ENCODE measurements at regions of chr19 and their contacts with region 1.

Region 1: DNA sequence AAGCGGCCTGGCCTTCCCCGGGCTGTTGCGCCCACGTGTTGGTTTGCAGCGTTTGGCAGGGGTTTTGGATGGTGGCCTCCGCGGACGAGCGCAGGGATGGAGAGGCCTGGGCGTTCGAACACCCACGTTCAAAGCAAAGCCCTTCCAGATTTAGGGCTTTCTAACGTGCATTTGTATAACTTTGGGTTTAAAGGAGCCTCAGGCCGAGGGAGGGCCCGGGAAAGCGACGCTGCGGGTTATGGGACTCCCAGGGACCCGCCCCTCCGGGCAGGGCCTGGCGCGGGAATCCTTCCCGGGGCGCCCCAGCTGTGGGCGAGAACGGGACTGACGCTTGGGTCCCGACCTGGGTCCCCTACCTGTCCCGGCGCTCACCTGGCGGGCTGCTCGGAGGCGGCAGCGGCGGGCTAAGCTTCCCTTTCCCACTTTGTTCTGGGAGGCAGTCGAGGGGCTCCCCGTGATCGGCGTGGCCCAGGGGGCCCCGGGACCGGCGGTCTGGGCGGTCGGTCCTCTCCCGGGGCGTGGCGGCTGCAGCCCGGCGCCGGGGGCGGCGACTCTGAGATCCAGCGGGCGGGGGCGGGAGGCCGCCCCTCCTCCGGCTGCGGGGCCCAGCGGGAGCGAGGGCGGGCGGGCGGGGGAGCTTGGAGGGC is at the start of gene FBXO17:
- DNase-seq: peak; percentile 84 to 87
- ATAC-seq: peak; percentile 83
- H3K4me3 ChIP-seq: peak within 1 kb of the TSS; percentile 51
- H3K27ac ChIP-seq: peak within 1 kb of the TSS; percentile 91 to 94
- H3K4me1 ChIP-seq: peaks cover 51% of the 10 kb centered on the region
- CTCF ChIP-seq: no peak; the same call in 2 of the 3 replicates
- EP300 ChIP-seq: 0 out of 5 replicates have a peak, but pooled peaks of 1 of the 2 experiments have one; percentile 6
- POLR2A ChIP-seq: peak; percentile 41
- RAD21 ChIP-seq: 0 out of 5 replicates have a peak, but pooled peaks have one; percentile 11 to 16
- polyA plus RNA-seq, gene FBXO17: 68.1 and 73.1 TPM in 2 replicates

Region 2: DNA sequence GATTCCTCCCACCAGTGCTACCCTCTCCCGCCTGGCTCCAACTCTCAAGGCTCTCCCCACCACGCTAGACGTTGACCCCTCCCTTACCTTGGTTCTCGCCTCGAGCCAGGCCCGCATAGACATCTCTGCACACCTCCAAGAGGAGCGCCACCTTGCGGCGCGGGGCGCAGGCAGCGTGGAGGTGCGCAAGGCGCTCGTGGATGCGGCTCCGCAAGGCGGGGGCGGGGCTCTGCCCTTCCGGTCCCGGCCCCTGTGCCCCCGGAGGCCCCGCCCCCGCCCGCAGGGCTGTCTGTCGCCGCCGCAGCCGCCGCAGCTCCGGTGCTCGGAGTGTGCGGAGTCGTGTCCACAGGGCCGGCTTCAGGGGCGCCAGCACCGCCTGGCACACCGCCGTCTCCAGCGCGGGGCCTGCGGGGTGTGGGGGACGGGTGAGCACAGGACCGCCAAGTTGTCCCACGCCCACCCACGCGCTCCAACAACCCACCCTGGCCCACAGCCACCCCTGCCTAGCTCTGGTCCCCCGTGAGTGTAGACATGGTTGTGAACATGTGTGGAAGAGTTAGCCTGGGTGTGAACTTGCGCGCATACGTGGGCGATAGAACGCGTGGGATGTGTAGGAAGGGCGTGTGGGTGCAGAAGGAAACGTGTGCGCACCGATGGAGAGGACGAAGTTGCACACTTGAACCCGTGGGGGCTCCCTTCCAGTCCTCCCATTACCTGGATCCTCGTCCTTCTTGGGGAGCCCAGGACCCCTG is 105.3 kb before region 1 on chr19:
- CTCF ChIA-PET with region 1: no interaction called
- POLR2A ChIA-PET with region 1: no interaction called
- DNase-seq: peak; percentile 89 to 93
- ATAC-seq: peak; percentile 90 to 94
- H3K4me3 ChIP-seq: peak overlapping the region; percentile 31
- H3K27ac ChIP-seq: peak overlapping the region; percentile 56 to 80
- H3K4me1 ChIP-seq: peaks cover 18% of the 10 kb centered on the region
- CTCF ChIP-seq: peak; percentile 99
- EP300 ChIP-seq: no peak
- POLR2A ChIP-seq: no peak; the same call in 1 of the 2 replicates
- RAD21 ChIP-seq: peak; percentile 73 to 88

Region 3: GRCh38 chr19:38949580-38950367 is 25.6 kb before region 1 on chr19:
- CTCF ChIA-PET with region 1: interaction called, 344 read pairs
- POLR2A ChIA-PET with region 1: no interaction called
- DNase-seq: no peak
- ATAC-seq: no peak
- H3K4me3 ChIP-seq: no peak overlapping the region
- H3K27ac ChIP-seq: no peak overlapping the region
- H3K4me1 ChIP-seq: peaks cover 23% of the 10 kb centered on the region
- CTCF ChIP-seq: no peak
- EP300 ChIP-seq: no peak
- POLR2A ChIP-seq: peak; percentile 27
- RAD21 ChIP-seq: no peak

Region 4: DNA sequence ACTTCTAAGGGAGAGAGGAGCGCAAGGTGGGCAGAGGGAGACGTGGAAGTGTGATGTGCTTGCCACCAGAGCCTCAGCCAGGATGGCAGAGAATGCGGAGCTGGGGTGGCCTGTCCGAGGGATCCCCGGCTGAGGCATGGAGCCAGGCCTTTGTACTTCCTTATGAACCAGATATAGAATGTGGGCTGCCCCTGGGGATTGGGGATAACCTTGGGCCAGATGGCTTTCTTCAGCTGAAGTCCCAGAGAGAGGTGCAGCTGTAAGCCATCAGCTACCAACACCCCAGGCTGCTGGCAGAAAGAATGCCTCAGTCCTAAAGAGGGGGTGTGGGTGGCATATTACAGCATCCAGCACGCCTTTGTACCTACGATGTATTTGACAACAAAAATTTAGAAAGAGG is 25.7 kb after region 1 on chr19:
- CTCF ChIA-PET with region 1: interaction called, 56 read pairs
- POLR2A ChIA-PET with region 1: interaction called, 6 read pairs
- DNase-seq: no peak
- ATAC-seq: peak; percentile 32 to 49; a peak in 4 of 6 replicates
- H3K4me3 ChIP-seq: no peak overlapping the region
- H3K27ac ChIP-seq: no peak overlapping the region
- H3K4me1 ChIP-seq: no peaks in the 10 kb centered on the region
- CTCF ChIP-seq: no peak
- EP300 ChIP-seq: no peak
- POLR2A ChIP-seq: no peak
- RAD21 ChIP-seq: no peak

Region 5: DNA sequence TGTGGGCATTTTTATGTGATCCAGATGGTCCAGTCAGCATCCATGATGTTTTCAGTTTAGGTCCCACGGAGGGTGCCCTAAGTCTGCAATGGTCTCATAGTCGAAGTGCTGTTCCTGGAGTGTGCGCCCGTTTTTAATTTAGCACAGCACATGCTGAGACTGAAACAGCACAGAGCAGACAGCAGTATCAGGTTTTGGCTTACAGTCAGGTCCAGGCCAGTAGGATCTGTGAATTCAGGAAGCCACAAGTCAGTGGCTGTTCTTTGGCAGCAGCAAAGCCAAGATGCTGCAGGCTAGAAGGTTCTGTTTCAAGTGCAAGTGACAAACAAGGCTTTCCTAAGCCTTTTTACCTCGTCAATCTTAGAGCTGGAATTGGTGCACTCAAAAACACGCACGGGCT is 38.7 kb after region 1 on chr19:
- CTCF ChIA-PET with region 1: interaction called, 31 read pairs
- POLR2A ChIA-PET with region 1: interaction called, 4 read pairs
- DNase-seq: no peak
- ATAC-seq: peak; percentile 22 to 43; a peak in 3 of 6 replicates
- H3K4me3 ChIP-seq: no peak overlapping the region
- H3K27ac ChIP-seq: no peak overlapping the region
- H3K4me1 ChIP-seq: no peaks in the 10 kb centered on the region
- CTCF ChIP-seq: no peak
- EP300 ChIP-seq: no peak
- POLR2A ChIP-seq: no peak
- RAD21 ChIP-seq: no peak

Region 6: GRCh38 chr19:39031368-39032062 is 56.2 kb after region 1 on chr19:
- CTCF ChIA-PET with region 1: interaction called, 93 read pairs
- POLR2A ChIA-PET with region 1: interaction called, 9 read pairs
- DNase-seq: peak; percentile 99
- ATAC-seq: peak; percentile 92 to 96
- H3K4me3 ChIP-seq: peak overlapping the region; percentile 53
- H3K27ac ChIP-seq: peak overlapping the region; percentile 83 to 92
- H3K4me1 ChIP-seq: peaks cover 25% of the 10 kb centered on the region
- CTCF ChIP-seq: no peak
- EP300 ChIP-seq: no peak
- POLR2A ChIP-seq: peak; percentile 83
- RAD21 ChIP-seq: no peak; a peak in 1 of 5 replicates

Region 7: DNA sequence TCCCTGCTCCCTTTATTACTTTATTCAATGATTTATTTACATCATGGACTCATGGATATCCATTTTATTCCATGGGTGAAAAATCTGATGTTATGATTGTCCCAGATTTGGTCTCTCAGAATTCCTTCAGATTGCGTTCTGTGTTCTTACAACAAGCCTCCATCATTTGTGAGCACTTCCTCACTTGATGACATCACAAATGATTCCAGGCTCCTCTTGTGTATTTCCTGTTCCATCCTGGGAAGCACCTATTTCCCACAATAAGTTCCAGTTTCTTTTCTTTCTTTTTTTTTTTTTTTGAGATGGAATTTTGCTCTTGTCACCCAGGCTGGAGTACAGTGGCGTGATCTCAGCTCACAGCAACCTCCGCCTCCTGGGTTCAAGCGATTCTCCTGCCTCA is 115.5 kb after region 1 on chr19:
- CTCF ChIA-PET with region 1: interaction called, 13 read pairs
- POLR2A ChIA-PET with region 1: no interaction called
- DNase-seq: no peak
- ATAC-seq: no peak
- H3K4me3 ChIP-seq: no peak overlapping the region
- H3K27ac ChIP-seq: no peak overlapping the region
- H3K4me1 ChIP-seq: peaks cover 19% of the 10 kb centered on the region
- CTCF ChIP-seq: no peak
- EP300 ChIP-seq: no peak
- POLR2A ChIP-seq: no peak
- RAD21 ChIP-seq: no peak